CD8-positive, alpha-beta T cell (primary cell): ENCODE measurements at regions of chr10 and their contacts with region 1.

Region 1: DNA sequence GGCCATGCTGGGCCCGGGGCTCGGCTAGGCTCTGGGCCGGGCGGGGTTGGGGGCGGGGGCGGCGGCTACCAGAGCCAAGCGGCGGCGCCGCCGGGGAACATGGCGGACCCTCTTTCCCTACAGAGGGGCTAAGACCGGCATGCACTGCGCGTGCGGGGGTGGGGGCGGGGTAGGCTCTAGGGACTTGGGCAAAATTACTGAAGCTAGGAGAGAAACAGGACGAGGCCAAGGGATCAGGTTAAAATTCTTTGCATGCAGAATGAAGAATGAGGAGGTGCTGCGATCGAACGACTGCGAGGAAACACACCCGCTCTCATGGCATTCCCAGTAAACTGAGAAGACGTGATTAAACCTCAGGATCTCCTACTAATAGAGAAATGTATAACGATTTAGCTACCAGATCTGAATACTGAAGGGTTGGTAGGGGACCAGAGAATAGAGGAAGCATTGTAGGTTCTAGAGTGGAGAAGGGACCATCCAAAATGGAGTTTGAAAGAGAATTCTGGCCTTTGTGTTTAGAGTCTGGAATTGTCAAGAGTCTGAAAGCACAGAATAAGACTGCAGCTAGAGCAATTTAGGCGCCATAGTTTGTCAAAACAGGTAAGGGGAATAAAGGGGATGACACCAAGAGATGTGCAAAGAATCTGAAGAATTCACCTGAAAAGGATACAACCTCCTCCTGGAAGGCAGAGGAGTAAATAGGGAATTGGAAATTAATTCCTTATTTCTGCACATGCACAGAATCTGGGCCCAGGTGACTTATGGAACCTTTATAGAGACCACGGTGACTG is at the start of gene PPP3CB:
- DNase-seq: peak; percentile 83 to 97 (median 89)
- ATAC-seq: peak; percentile 85
- H3K4me3 ChIP-seq: peak within 1 kb of the TSS; percentile 91 to 94
- H3K4me3 Mint-ChIP-seq: peak within 1 kb of the TSS; percentile 81
- H3K27ac ChIP-seq: peak within 1 kb of the TSS; percentile 87 to 93
- H3K27ac Mint-ChIP-seq: peak within 1 kb of the TSS; percentile 95
- H3K4me1 ChIP-seq: peaks cover 33% of the 10 kb centered on the region
- H3K4me1 Mint-ChIP-seq: peaks cover 49% of the 10 kb centered on the region
- H3K27me3 ChIP-seq: no peaks in the 10 kb centered on the region
- H3K27me3 Mint-ChIP-seq: no peaks in the 10 kb centered on the region
- CTCF ChIP-seq: no peak
- total RNA-seq, gene PPP3CB: 15.8 to 17.0 TPM

Region 2: GRCh38 chr10:73096449-73097304 is 399.4 kb before region 1 on chr10 and contains the start of gene P4HA1:
- CTCF ChIA-PET with region 1: no interaction called
- POLR2A ChIA-PET with region 1: no interaction called
- intact Hi-C with region 1: loop called (anchors 2 to 10 kb)
- DNase-seq: peak; percentile 96 to 100 (median 98)
- ATAC-seq: peak; percentile 84
- H3K4me3 ChIP-seq: peak within 1 kb of the TSS; percentile 72 to 92
- H3K4me3 Mint-ChIP-seq: peak within 1 kb of the TSS; percentile 85
- H3K27ac ChIP-seq: peak within 1 kb of the TSS; percentile 60 to 95
- H3K27ac Mint-ChIP-seq: peak within 1 kb of the TSS; percentile 96
- H3K4me1 ChIP-seq: peaks cover 18% of the 10 kb centered on the region
- H3K4me1 Mint-ChIP-seq: peaks cover 32% of the 10 kb centered on the region
- H3K27me3 ChIP-seq: no peaks in the 10 kb centered on the region
- H3K27me3 Mint-ChIP-seq: no peaks in the 10 kb centered on the region
- CTCF ChIP-seq: peak; percentile 70
- total RNA-seq, gene P4HA1: 9.0 to 10.1 TPM

Region 3: GRCh38 chr10:73358331-73359279 is 137.5 kb before region 1 on chr10 and contains the start of gene CFAP70:
- CTCF ChIA-PET with region 1: no interaction called
- POLR2A ChIA-PET with region 1: interaction called, 11 read pairs
- intact Hi-C with region 1: loop called (anchors 1 to 5 kb)
- DNase-seq: peak; percentile 83 to 98 (median 90)
- ATAC-seq: peak; percentile 96
- H3K4me3 ChIP-seq: peak within 1 kb of the TSS; percentile 71 to 75
- H3K4me3 Mint-ChIP-seq: peak within 1 kb of the TSS; percentile 98
- H3K27ac ChIP-seq: peak within 1 kb of the TSS; percentile 78 to 88
- H3K27ac Mint-ChIP-seq: peak within 1 kb of the TSS; percentile 96
- H3K4me1 ChIP-seq: peaks cover 5% of the 10 kb centered on the region
- H3K4me1 Mint-ChIP-seq: peaks cover 16% of the 10 kb centered on the region
- H3K27me3 ChIP-seq: peaks cover 0 to 8% of the 10 kb centered on the region in 2 experiments
- H3K27me3 Mint-ChIP-seq: peaks cover 2% of the 10 kb centered on the region
- CTCF ChIP-seq: no peak
- total RNA-seq, gene CFAP70: 2.4 to 2.8 TPM

Region 4: GRCh38 chr10:73480158-73480557 is 15.9 kb before region 1 on chr10:
- CTCF ChIA-PET with region 1: no interaction called
- POLR2A ChIA-PET with region 1: interaction called, 7 read pairs
- intact Hi-C with region 1: loop called in 1 of 2 experiments (anchors 2 kb)
- DNase-seq: no peak
- ATAC-seq: no peak
- H3K4me3 ChIP-seq: no peak overlapping the region
- H3K4me3 Mint-ChIP-seq: no peak overlapping the region
- H3K27ac ChIP-seq: no peak overlapping the region
- H3K27ac Mint-ChIP-seq: no peak overlapping the region
- H3K4me1 ChIP-seq: no peaks in the 10 kb centered on the region
- H3K4me1 Mint-ChIP-seq: peaks cover 22% of the 10 kb centered on the region
- H3K27me3 ChIP-seq: no peaks in the 10 kb centered on the region
- H3K27me3 Mint-ChIP-seq: no peaks in the 10 kb centered on the region
- CTCF ChIP-seq: no peak

Region 5: GRCh38 chr10:73743905-73744663 is 248.0 kb after region 1 on chr10 and contains the start of gene SEC24C:
- CTCF ChIA-PET with region 1: no interaction called
- POLR2A ChIA-PET with region 1: interaction called, 8 read pairs
- intact Hi-C with region 1: loop called in 1 of 2 experiments (anchors 1 kb)
- DNase-seq: peak; percentile 91 to 99 (median 95)
- ATAC-seq: peak; percentile 89
- H3K4me3 ChIP-seq: peak within 1 kb of the TSS; percentile 78 to 79
- H3K4me3 Mint-ChIP-seq: peak within 1 kb of the TSS; percentile 100
- H3K27ac ChIP-seq: peak within 1 kb of the TSS; percentile 94
- H3K27ac Mint-ChIP-seq: peak within 1 kb of the TSS; percentile 100
- H3K4me1 ChIP-seq: peaks cover 31% of the 10 kb centered on the region
- H3K4me1 Mint-ChIP-seq: peaks cover 38% of the 10 kb centered on the region
- H3K27me3 ChIP-seq: no peaks in the 10 kb centered on the region
- H3K27me3 Mint-ChIP-seq: no peaks in the 10 kb centered on the region
- CTCF ChIP-seq: no peak
- total RNA-seq, gene SEC24C: 76.9 to 78.6 TPM

Region 6: GRCh38 chr10:73810735-73811465 is 314.8 kb after region 1 on chr10:
- CTCF ChIA-PET with region 1: no interaction called
- POLR2A ChIA-PET with region 1: no interaction called
- intact Hi-C with region 1: loop called (anchors 1 to 2 kb)
- DNase-seq: peak; percentile 19 to 79 (median 66)
- ATAC-seq: peak; percentile 12
- H3K4me3 ChIP-seq: peak overlapping the region; percentile 56 to 87
- H3K4me3 Mint-ChIP-seq: peak overlapping the region; percentile 89
- H3K27ac ChIP-seq: peak overlapping the region; percentile 71 to 91
- H3K27ac Mint-ChIP-seq: peak overlapping the region; percentile 95
- H3K4me1 ChIP-seq: peaks cover 48% of the 10 kb centered on the region
- H3K4me1 Mint-ChIP-seq: peaks cover 44% of the 10 kb centered on the region
- H3K27me3 ChIP-seq: no peaks in the 10 kb centered on the region
- H3K27me3 Mint-ChIP-seq: no peaks in the 10 kb centered on the region
- CTCF ChIP-seq: no peak